Activated CD4-positive, alpha-beta T cell treated with anti-CD3 and anti-CD28 coated beads for 36 hours (primary cell): ENCODE measurements at regions of chr3 and their contacts with region 1.

Region 1: DNA sequence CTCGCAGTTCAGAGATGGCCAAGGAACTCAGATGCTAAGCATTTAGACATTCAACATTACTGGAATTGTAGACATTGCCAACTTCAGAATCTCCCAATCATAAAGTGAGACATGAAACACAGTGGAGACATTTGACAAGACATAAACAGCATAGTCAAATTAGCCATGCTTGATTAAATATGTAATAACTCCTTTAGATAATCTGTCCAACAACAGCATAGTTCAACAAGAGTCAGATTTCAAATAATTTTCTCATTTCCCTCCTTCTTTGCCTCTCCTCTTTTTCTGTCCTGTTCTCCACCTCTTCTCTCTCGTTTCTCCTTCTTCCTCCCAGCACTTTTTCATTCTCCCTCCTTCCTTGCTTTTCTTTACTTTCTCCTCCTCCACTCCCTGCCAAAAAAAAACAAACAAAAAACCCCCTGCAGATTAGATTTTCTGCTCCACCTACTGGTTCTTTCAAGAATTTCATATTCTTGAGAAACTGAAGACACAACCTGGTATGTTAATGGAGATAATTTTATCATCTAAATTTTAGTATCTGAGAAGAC is 20.2 kb downstream of the CPOX start:
- DNase-seq: no peak
- ATAC-seq: no peak
- H3K4me3 Mint-ChIP-seq: peak overlapping the region; percentile 11
- H3K27ac Mint-ChIP-seq: peak overlapping the region; percentile 70
- H3K4me1 Mint-ChIP-seq: peaks cover 49% of the 10 kb centered on the region
- H3K27me3 Mint-ChIP-seq: peaks cover 4% of the 10 kb centered on the region

Region 2: GRCh38 chr3:98039322-98040024 is 533.8 kb before region 1 on chr3:
- CTCF ChIA-PET with region 1: no interaction called
- POLR2A ChIA-PET with region 1: no interaction called
- intact Hi-C with region 1: loop called (anchors 2 to 5 kb)
- DNase-seq: peak; percentile 84
- ATAC-seq: peak; percentile 88
- H3K4me3 Mint-ChIP-seq: peak overlapping the region; percentile 76
- H3K27ac Mint-ChIP-seq: peak overlapping the region; percentile 97
- H3K4me1 Mint-ChIP-seq: peaks cover 12% of the 10 kb centered on the region
- H3K27me3 Mint-ChIP-seq: peaks cover 4% of the 10 kb centered on the region

Region 3: DNA sequence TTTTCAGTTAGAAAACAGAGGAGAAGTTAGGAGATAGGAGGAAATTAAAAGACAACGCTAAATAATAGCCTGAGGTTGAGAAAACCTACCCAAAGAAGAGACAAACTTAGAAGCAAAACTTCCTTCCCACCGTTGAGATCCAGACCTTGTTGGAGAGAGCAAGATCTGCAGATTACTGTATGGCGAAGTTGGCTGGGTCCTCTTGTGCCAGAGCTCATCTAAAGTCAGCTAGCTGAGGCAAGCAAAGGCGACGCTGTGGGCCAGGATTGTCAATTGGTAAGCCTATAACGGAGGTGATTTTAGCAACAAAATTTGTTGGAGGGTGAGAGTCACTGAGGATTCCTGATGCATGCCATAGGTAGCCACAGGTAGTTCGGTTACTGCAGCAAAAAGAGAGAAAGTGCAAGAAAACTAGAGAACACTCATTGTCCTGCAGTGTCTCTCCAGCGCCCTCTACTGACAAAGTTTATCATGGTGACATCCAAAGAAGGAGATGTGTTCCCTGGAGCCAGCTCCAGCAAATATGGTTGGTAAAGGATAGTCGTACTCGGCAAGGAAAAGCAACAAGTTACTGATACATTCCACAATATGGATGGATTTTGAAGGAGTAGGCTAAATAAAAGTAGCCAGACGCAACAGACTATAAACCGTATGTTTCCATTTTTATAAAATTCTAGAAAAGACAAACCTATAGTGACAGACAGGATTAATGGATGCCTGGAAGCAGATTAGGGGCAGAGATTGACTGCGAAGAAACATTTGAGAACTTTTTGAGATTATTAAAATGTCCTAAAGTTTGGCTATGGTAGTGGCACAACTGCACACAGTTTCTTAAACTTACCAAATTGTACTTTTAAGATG is 229.4 kb before region 1 on chr3:
- CTCF ChIA-PET with region 1: interaction called, 3 read pairs
- POLR2A ChIA-PET with region 1: no interaction called
- intact Hi-C with region 1: loop called in 1 of 2 experiments (anchors 1 kb)
- DNase-seq: peak; percentile 56
- ATAC-seq: no peak
- H3K4me3 Mint-ChIP-seq: no peak overlapping the region
- H3K27ac Mint-ChIP-seq: no peak overlapping the region
- H3K4me1 Mint-ChIP-seq: peaks cover 2% of the 10 kb centered on the region
- H3K27me3 Mint-ChIP-seq: peaks cover 11% of the 10 kb centered on the region

Region 4: GRCh38 chr3:98532709-98533571 is 40.3 kb before region 1 on chr3:
- CTCF ChIA-PET with region 1: interaction called, 12 read pairs
- POLR2A ChIA-PET with region 1: no interaction called
- intact Hi-C with region 1: no loop called
- DNase-seq: no peak
- ATAC-seq: no peak
- H3K4me3 Mint-ChIP-seq: peak overlapping the region; percentile 26
- H3K27ac Mint-ChIP-seq: no peak overlapping the region
- H3K4me1 Mint-ChIP-seq: peaks cover 39% of the 10 kb centered on the region
- H3K27me3 Mint-ChIP-seq: peaks cover 3% of the 10 kb centered on the region

Region 5: GRCh38 chr3:98556164-98557130 is 16.8 kb before region 1 on chr3:
- CTCF ChIA-PET with region 1: interaction called, 17 read pairs
- POLR2A ChIA-PET with region 1: no interaction called
- intact Hi-C with region 1: no loop called
- DNase-seq: peak; percentile 86
- ATAC-seq: peak; percentile 78
- H3K4me3 Mint-ChIP-seq: peak overlapping the region; percentile 67
- H3K27ac Mint-ChIP-seq: peak overlapping the region; percentile 94
- H3K4me1 Mint-ChIP-seq: peaks cover 83% of the 10 kb centered on the region
- H3K27me3 Mint-ChIP-seq: no peaks in the 10 kb centered on the region